HEK293 (cell line): ENCODE measurements at regions of chr21 and their contacts with region 1.

Region 1: DNA sequence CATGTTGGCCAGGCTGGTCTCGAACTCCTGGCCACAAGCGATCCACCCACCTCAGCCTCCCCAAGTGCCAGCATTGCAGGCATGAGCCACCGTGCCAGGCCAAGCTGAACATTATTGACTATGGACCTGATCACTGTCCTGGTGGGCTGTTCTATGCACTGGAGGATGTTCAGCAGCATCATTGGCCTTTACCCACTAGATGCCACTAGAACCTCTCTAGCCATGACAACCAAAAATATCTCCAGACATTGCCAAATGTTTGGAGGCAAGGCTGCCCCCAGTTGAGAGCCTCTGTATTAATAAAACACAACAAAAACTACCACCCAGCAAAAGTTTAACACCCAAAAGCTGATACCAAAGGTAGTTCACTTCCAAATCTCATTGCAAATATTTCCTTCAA is 110.8 kb upstream of the SOD1 start:
- H3K4me3 ChIP-seq: no peak overlapping the region
- H3K27ac ChIP-seq: no peak overlapping the region
- H3K4me1 ChIP-seq: peaks cover 16% of the 10 kb centered on the region
- CTCF ChIP-seq: peak; percentile 80

Region 2: GRCh38 chr21:31537872-31538576 is 10.7 kb before region 1 on chr21:
- CTCF ChIA-PET with region 1: interaction called, 10 read pairs
- POLR2A ChIA-PET with region 1: interaction called, 3 read pairs
- H3K4me3 ChIP-seq: no peak overlapping the region
- H3K27ac ChIP-seq: no peak overlapping the region
- H3K4me1 ChIP-seq: peaks cover 3% of the 10 kb centered on the region
- CTCF ChIP-seq: no peak

Region 3: DNA sequence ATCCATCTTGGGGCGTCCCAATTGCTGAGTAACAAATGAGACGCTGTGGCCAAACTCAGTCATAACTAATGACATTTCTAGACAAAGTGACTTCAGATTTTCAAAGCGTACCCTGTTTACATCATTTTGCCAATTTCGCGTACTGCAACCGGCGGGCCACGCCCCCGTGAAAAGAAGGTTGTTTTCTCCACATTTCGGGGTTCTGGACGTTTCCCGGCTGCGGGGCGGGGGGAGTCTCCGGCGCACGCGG is 110.5 kb after region 1 on chr21:
- CTCF ChIA-PET with region 1: no interaction called
- POLR2A ChIA-PET with region 1: no interaction called
- H3K4me3 ChIP-seq: peak overlapping the region; percentile 89
- H3K27ac ChIP-seq: no peak overlapping the region
- H3K4me1 ChIP-seq: 0 out of 2 replicates have a peak, but pooled peaks cover 2% of the 10 kb centered on the region
- CTCF ChIP-seq: no peak